Body of pancreas (tissue), 4 donors: ENCODE measurements at regions of chr20 and their contacts with region 1.

Region 1: GRCh38 chr20:3470627-3471396 is at the start of gene ATRN:
- DNase-seq: peak; percentile 88 to 92 (median 90)
- ATAC-seq: peak; percentile 95
- H3K4me3 ChIP-seq: peak within 1 kb of the TSS; percentile 83 to 91
- H3K27ac ChIP-seq: peak within 1 kb of the TSS; percentile 57 to 89 (median 78)
- H3K4me1 ChIP-seq: peaks cover 36% of the 10 kb centered on the region
- H3K27me3 ChIP-seq: no peaks in the 10 kb centered on the region
- CTCF ChIP-seq: peak in 3 of 7 experiments; percentile 3 to 7 (median 4)
- POLR2A ChIP-seq: peak; percentile 67 to 86 (median 86)
- total RNA-seq, gene ATRN: 17.6 to 18.8 TPM

Region 2: GRCh38 chr20:3390759-3391500 is 79.9 kb before region 1 on chr20:
- intact Hi-C with region 1: loop called (anchors 10 kb)
- DNase-seq: no peak
- ATAC-seq: no peak
- H3K4me3 ChIP-seq: no peak overlapping the region
- H3K27ac ChIP-seq: peak overlapping the region in 2 of 4 donors; percentile 6 to 35
- H3K4me1 ChIP-seq: peaks cover 14% of the 10 kb centered on the region
- H3K27me3 ChIP-seq: no peaks in the 10 kb centered on the region
- CTCF ChIP-seq: no peak
- POLR2A ChIP-seq: no peak

Region 3: DNA sequence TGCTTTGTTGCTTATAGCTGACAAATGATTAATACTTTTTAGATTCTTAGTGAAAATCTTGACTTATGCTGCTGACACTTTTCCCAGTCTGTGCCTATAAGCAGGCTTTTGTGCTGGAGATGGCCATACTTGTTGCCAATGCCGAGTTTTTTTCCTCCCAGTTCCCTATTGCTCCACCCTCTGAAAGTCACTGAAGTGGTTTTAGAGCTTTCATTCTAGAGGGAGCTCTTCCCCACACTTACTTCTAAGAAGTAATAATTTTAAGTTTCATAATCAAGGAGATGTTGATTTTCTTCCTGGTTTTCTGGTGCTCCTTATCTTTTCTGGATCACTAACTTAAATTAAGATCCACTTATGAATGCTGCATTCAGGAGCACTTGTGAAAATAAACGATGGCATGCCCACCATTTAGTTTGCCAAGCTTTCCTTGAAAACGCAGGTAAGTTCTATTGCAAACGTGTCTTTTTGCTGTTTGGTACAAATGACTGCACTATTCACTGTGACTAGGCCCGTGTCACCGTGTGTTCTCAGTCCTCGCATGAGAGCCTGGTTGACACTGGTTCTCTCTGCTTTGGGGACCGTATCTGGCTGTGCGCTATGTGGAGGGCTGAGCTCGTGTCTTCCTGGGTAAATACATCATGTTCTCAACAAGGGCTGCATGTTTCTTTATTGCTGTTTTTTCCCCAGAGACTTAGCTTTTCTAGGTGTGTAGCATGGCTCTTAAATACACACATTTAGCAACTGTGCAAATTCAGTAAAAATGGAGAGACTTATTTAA is 142.2 kb after region 1 on chr20:
- intact Hi-C with region 1: no loop called
- DNase-seq: no peak
- ATAC-seq: no peak
- H3K4me3 ChIP-seq: no peak overlapping the region
- H3K27ac ChIP-seq: no peak overlapping the region
- H3K4me1 ChIP-seq: no peaks in the 10 kb centered on the region
- H3K27me3 ChIP-seq: no peaks in the 10 kb centered on the region
- CTCF ChIP-seq: no peak
- POLR2A ChIP-seq: no peak